ENCODE measurements at regions of chr14 and their contacts with region 1.

Region 1: GRCh38 chr14:50520947-50521815 is 11.2 kb downstream of the MAP4K5 start:
- DNase-seq: peak; percentile 84
- H3K4me3 Mint-ChIP-seq: peak overlapping the region; percentile 25
- H3K27ac Mint-ChIP-seq: peak overlapping the region; percentile 85
- H3K4me1 Mint-ChIP-seq: peaks cover 56% of the 10 kb centered on the region
- H3K27me3 Mint-ChIP-seq: no peaks in the 10 kb centered on the region

Region 2: GRCh38 chr14:50231475-50232275 is 289.5 kb before region 1 on chr14 and contains the start of gene SOS2:
- CTCF ChIA-PET with region 1: no interaction called
- POLR2A ChIA-PET with region 1: no interaction called
- intact Hi-C with region 1: loop called (anchors 2 kb)
- DNase-seq: peak; percentile 86
- H3K4me3 Mint-ChIP-seq: peak within 1 kb of the TSS; percentile 78
- H3K27ac Mint-ChIP-seq: peak within 1 kb of the TSS; percentile 85
- H3K4me1 Mint-ChIP-seq: peaks cover 40% of the 10 kb centered on the region
- H3K27me3 Mint-ChIP-seq: no peaks in the 10 kb centered on the region
- total RNA-seq, gene SOS2: 19.6 to 20.9 TPM

Region 3: GRCh38 chr14:50342221-50343078 is 178.7 kb before region 1 on chr14:
- CTCF ChIA-PET with region 1: no interaction called
- POLR2A ChIA-PET with region 1: interaction called, 4 read pairs
- intact Hi-C with region 1: loop called (anchors 1 kb)
- DNase-seq: peak; percentile 56
- H3K4me3 Mint-ChIP-seq: no peak overlapping the region
- H3K27ac Mint-ChIP-seq: no peak overlapping the region
- H3K4me1 Mint-ChIP-seq: peaks cover 22% of the 10 kb centered on the region
- H3K27me3 Mint-ChIP-seq: peaks cover 4% of the 10 kb centered on the region

Region 4: DNA sequence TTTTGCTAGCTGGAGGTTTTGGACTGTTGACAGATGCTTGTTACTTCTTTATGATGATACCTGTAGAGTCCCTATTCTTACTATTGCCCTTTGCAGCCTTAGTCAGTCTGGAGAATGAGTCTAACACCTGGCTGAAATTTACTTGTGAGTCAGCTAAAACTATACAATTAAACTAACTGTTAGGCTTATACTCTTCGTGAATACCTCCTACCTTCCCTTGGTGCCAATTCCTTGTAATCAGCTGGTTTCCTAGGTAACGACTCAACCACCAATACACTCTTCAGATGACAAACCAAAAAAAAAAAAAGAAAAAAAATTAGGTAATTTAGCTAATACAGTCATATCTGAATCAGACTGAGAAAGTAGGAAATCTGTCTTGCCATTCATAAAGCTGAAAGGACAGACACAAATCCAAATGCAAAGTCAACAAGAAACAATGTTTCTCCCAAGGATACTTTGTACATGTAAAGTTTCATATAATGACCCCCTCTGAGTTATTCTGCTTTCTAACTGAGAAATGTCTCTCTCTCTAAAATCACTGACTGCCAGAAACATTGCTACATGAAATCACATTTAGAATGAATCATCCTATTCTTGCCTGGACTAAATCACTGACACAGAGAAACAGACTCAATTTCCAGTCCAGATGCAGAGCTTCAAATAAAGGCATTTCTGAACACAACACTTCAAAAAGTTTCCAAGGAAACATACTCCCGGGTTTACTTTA is 68.0 kb before region 1 on chr14:
- CTCF ChIA-PET with region 1: no interaction called
- POLR2A ChIA-PET with region 1: no interaction called
- intact Hi-C with region 1: loop called (anchors 1 kb)
- DNase-seq: no peak
- H3K4me3 Mint-ChIP-seq: no peak overlapping the region
- H3K27ac Mint-ChIP-seq: peak overlapping the region; percentile 18
- H3K4me1 Mint-ChIP-seq: peaks cover 16% of the 10 kb centered on the region
- H3K27me3 Mint-ChIP-seq: no peaks in the 10 kb centered on the region

Region 5: GRCh38 chr14:50573858-50574257 is 52.7 kb after region 1 on chr14:
- CTCF ChIA-PET with region 1: no interaction called
- POLR2A ChIA-PET with region 1: no interaction called
- intact Hi-C with region 1: no loop called
- DNase-seq: no peak
- H3K4me3 Mint-ChIP-seq: no peak overlapping the region
- H3K27ac Mint-ChIP-seq: no peak overlapping the region
- H3K4me1 Mint-ChIP-seq: no peaks in the 10 kb centered on the region
- H3K27me3 Mint-ChIP-seq: no peaks in the 10 kb centered on the region

Region 6: DNA sequence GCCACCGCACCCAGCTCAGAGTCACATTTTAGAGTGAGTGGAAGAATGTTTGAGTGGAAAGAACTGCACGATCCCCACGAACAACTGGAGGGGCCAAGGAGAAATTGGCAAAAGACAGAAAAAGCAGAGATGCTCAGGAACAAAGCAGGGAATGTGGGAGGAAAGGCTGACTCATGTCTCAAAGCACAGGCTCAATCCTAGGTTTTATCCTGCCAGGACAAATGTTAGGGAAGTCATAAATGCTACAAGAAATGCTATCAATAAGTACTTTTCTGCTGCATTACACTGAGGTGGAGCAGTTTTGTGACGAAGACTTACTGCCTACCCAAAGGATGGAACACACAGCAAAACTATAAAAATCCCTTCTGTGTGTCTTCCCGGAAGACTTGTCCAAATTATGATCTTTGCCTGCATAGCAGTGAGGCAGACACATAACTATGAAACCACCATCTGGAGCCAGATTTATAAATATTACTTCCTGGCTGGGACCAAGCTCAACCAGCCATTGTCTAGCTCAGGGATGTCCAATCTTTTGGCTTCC is 283.1 kb after region 1 on chr14:
- CTCF ChIA-PET with region 1: no interaction called
- POLR2A ChIA-PET with region 1: no interaction called
- intact Hi-C with region 1: no loop called
- DNase-seq: no peak
- H3K4me3 Mint-ChIP-seq: no peak overlapping the region
- H3K27ac Mint-ChIP-seq: no peak overlapping the region
- H3K4me1 Mint-ChIP-seq: peaks cover 7% of the 10 kb centered on the region
- H3K27me3 Mint-ChIP-seq: no peaks in the 10 kb centered on the region

Measured in activated CD4-positive, alpha-beta memory T cell treated with anti-CD3 and anti-CD28 coated beads for 36 hours (primary cell).